T-cell (primary cell): ENCODE measurements at regions of chr1 and their contacts with region 1.

Region 1: GRCh38 chr1:211133836-211134669 is at the start of gene KCNH1:
- DNase-seq: peak; percentile 50 to 86 (median 69)
- ATAC-seq: peak; percentile 86 to 92 (median 90)
- H3K4me3 ChIP-seq: peak within 1 kb of the TSS; percentile 47 to 61
- H3K4me3 Mint-ChIP-seq: peak within 1 kb of the TSS; percentile 62 to 69 (median 69)
- H3K27ac ChIP-seq: no peak within 1 kb of the TSS
- H3K27ac Mint-ChIP-seq: no peak within 1 kb of the TSS
- H3K4me1 ChIP-seq: peaks cover 3 to 17% of the 10 kb centered on the region in 2 experiments
- H3K4me1 Mint-ChIP-seq: peaks cover 8 to 11% (median 11%) of the 10 kb centered on the region in 3 donors
- H3K27me3 ChIP-seq: peaks cover 12 to 19% of the 10 kb centered on the region in 2 experiments
- H3K27me3 Mint-ChIP-seq: peaks cover 42 to 56% of the 10 kb centered on the region in 2 donors
- total RNA-seq, gene KCNH1: not detected

Region 2: DNA sequence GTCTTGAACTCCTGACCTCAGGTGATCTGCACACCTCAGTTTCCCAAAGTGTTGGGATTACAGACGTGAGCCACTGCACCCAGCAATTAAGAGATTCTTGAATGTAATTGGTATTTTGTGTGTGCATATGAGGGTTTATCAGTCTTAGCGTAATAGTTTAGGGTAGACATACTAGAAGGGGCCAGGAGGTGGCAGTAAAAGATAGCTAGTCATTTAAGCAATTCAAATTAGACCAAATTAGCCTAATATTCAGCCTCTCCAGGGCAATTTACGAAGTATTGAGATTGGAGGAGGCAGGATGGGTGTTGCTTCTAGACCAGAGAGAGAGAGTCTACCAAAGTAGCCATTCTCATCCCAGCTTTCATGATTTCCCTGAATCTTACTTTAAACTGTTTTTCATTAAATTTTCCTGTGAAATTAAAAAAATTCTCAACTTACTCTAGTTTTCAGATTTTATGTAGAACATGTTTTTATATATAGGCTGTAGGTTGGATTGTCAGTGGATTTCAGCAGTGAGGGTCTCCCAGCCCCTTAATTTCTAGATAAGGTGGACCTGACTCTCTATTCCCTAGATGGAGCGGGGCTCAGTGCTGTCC is 685.7 kb before region 1 on chr1:
- CTCF ChIA-PET with region 1: interaction called in 1 of 2 experiments, 11 read pairs
- POLR2A ChIA-PET with region 1: no interaction called
- DNase-seq: peak in 4 of 35 experiments; percentile 3 to 51 (median 14)
- ATAC-seq: no peak
- H3K4me3 ChIP-seq: no peak overlapping the region
- H3K4me3 Mint-ChIP-seq: no peak overlapping the region
- H3K27ac ChIP-seq: no peak overlapping the region
- H3K27ac Mint-ChIP-seq: no peak overlapping the region
- H3K4me1 ChIP-seq: peaks cover 2 to 11% of the 10 kb centered on the region in 2 experiments
- H3K4me1 Mint-ChIP-seq: peaks cover 14 to 18% (median 17%) of the 10 kb centered on the region in 3 donors
- H3K27me3 ChIP-seq: no peaks in the 10 kb centered on the region
- H3K27me3 Mint-ChIP-seq: peaks cover 0 to 3% of the 10 kb centered on the region in 2 donors

Region 3: DNA sequence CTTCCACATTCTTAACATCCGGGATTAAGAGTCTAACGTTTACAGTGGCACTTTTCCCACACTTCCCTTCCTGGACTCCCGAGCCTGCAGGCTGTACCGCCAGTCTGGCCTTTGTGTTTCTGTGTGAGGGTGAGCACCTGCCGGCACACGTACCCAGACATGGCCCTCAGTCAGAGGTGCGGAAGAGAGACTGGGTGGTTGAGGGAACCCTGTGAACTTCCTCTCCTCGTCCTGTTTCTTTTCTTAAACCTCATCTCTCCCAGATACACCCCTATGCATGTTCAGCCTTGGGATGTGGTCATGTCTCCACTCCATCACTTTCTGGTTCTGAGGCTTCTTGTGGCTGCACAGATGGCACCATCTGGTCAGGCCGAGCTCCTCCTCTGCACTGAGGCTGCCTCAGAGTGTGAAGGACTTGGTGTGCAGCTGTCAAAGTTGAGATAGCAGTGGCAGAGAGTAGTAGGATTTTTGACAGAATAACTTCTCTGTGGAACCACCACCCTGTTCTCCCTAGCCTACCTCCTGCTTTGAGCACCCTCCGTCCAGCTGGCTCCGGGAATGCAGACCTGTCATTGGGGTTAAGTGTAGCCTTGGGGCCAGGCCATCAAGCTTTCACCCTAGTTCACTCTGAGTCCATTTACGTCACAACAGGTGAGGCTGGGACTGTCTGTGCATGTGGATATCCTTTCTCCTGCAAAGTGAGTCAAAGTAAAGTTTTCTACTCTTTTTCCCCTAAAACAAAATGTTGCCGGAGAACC is 1847.7 kb after region 1 on chr1:
- CTCF ChIA-PET with region 1: no interaction called
- POLR2A ChIA-PET with region 1: no interaction called
- DNase-seq: no peak
- ATAC-seq: no peak
- H3K4me3 ChIP-seq: no peak overlapping the region
- H3K4me3 Mint-ChIP-seq: no peak overlapping the region
- H3K27ac ChIP-seq: no peak overlapping the region
- H3K27ac Mint-ChIP-seq: no peak overlapping the region
- H3K4me1 ChIP-seq: peaks cover 0 to 23% of the 10 kb centered on the region in 2 experiments
- H3K4me1 Mint-ChIP-seq: peaks cover 0 to 19% (median 7%) of the 10 kb centered on the region in 3 donors
- H3K27me3 ChIP-seq: peaks cover 0 to 22% of the 10 kb centered on the region in 2 experiments
- H3K27me3 Mint-ChIP-seq: peaks cover 0 to 3% of the 10 kb centered on the region in 2 donors